ENCODE measurements at regions of chr1 and their contacts with region 1.

Region 1: DNA sequence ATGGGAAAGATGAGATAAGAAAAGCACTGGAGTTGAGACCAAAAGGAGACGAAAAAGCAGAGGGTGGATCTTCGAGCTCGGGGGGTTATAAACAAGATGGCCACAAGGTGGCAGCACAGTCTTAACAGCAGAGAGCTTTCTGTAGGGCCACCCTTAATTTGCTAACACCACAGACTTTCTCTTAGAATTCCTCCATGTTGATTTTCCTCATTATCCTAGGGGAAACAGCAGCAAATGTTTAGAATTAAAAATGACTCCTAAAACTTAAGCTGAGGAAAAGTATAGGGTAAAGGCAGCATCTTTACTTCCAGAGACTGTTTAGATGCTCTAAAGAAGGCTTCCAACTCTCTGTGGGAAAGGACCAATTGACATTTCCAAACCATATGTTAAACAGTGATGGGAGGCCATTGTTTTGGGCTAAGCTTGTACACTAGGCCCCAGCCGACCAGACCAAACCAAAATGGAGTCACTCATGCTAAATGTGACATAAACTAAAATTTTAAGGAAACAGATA is 2.5 kb upstream of the APOBEC4 start:
- DNase-seq: peak; percentile 45 to 84 (median 68)
- ATAC-seq: peak; percentile 87 to 97 (median 90)
- H3K4me3 ChIP-seq: no peak overlapping the region
- H3K27ac ChIP-seq: no peak overlapping the region
- H3K4me1 ChIP-seq: peaks cover 0 to 3% (median 0%) of the 10 kb centered on the region in 3 donors
- H3K27me3 ChIP-seq: no peaks in the 10 kb centered on the region
- CTCF ChIP-seq: peak; percentile 71 to 84 (median 74)

Region 2: GRCh38 chr1:183915625-183916510 is 260.2 kb after region 1 on chr1:
- intact Hi-C with region 1: loop called (anchors 5 to 10 kb)
- DNase-seq: peak in 4 of 6 donors; percentile 51 to 77 (median 60)
- ATAC-seq: peak; percentile 91 to 94 (median 93)
- H3K4me3 ChIP-seq: no peak overlapping the region
- H3K27ac ChIP-seq: no peak overlapping the region
- H3K4me1 ChIP-seq: peaks cover 0 to 3% (median 0%) of the 10 kb centered on the region in 3 donors
- H3K27me3 ChIP-seq: no peaks in the 10 kb centered on the region
- CTCF ChIP-seq: peak; percentile 56 to 81 (median 78)

Region 3: DNA sequence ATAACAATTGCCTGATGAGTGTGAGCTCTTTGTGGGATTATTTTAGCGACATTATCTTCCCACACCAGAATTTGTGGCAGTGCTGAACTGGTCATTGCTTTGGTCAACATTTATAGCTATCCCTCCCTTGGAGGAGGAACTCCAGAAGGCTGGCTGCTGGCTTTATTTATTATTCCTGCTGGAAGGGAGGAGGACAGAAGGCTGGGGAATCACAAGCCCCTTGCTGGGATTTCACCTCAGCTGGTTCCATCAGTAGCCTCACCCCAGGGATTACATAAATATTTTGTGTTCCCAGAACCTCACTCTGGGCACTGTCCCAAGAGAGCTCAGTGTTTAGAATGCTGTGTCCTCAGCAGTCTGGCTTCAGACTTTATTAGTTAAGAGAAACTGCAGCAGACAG is 628.4 kb after region 1 on chr1:
- intact Hi-C with region 1: no loop called
- DNase-seq: no peak
- ATAC-seq: peak in 1 of 4 donors; percentile 40
- H3K4me3 ChIP-seq: no peak overlapping the region
- H3K27ac ChIP-seq: no peak overlapping the region
- H3K4me1 ChIP-seq: no peaks in the 10 kb centered on the region
- H3K27me3 ChIP-seq: no peaks in the 10 kb centered on the region
- CTCF ChIP-seq: no peak

Region 4: DNA sequence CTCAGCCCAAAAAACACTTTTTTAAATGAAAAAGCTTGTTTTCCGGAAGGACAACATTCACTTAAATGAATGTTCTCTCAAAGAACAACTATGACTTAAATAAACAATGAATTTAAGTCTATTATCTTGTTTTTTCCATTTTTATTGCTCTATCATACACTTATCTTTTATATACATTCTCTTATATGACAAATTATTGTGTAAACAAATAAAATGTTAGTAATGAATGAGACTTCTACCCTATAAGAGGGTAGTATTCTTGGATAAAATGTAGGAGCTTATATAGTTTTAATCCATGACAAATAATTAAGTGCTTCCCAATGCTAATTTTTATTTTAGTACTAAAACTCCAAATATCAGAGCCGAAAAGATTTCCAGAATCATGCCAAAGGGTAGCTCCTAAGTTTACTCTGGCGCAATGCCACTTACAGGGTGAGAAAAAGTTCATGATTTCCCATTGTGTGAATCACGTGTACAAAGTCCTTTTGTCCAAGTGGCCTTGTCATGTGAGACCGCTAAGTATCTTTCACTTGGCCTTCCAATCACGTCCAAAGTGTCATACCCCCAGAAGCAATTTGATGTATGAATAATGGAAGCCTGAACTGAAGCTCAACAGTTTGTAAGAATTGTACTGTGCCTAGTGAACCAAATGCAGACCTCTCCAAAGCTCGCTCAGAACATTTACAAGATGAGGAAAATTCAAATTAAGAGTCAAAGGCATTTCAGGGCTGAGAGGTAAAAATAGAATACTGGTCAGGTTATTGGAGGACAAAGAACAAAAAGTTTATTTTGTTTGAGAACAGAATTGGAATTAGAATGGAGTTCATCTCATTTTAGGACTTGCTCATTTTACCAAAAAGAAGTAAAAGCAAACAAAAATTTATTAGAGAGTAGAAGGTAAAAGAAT is 674.6 kb after region 1 on chr1:
- intact Hi-C with region 1: no loop called
- DNase-seq: peak in 3 of 6 donors; percentile 42 to 54 (median 48)
- ATAC-seq: peak; percentile 66 to 87 (median 80)
- H3K4me3 ChIP-seq: no peak overlapping the region
- H3K27ac ChIP-seq: no peak overlapping the region
- H3K4me1 ChIP-seq: peaks cover 7 to 12% (median 8%) of the 10 kb centered on the region in 3 donors
- H3K27me3 ChIP-seq: no peaks in the 10 kb centered on the region
- CTCF ChIP-seq: no peak